GM10248 (cell line): ENCODE measurements at regions of chr6 and their contacts with region 1.

Region 1: DNA sequence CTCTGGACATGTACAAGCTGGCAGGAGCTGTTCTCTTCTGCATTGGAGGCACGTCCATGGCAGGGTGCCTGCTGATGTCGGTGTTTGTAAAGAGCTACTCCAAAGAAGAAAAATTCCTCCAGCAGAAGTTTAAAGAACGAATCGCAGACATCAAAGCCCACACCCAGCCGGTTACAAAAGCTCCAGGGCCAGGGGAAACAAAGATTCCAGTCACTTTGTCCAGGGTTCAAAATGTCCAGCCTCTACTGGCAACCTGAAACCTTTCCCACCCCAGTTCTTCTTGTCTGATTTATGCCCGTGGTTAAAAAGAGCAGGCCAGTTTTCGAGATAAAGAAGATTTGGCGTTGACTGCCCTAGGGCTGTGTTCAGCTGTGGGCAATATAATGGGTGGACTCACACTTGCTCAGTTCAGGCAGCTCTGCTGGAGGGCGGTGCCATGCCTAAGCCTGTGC is 19.7 kb downstream of the NRSN1 start:
- DNase-seq: no peak
- CTCF ChIP-seq: no peak

Region 2: GRCh38 chr6:24078200-24078599 is 67.5 kb before region 1 on chr6:
- CTCF ChIA-PET with region 1: no interaction called
- POLR2A ChIA-PET with region 1: no interaction called
- DNase-seq: no peak
- CTCF ChIP-seq: no peak

Region 3: GRCh38 chr6:24157886-24158285 is 12.2 kb after region 1 on chr6:
- CTCF ChIA-PET with region 1: interaction called, 14 read pairs
- POLR2A ChIA-PET with region 1: no interaction called
- DNase-seq: no peak
- CTCF ChIP-seq: no peak

Region 4: DNA sequence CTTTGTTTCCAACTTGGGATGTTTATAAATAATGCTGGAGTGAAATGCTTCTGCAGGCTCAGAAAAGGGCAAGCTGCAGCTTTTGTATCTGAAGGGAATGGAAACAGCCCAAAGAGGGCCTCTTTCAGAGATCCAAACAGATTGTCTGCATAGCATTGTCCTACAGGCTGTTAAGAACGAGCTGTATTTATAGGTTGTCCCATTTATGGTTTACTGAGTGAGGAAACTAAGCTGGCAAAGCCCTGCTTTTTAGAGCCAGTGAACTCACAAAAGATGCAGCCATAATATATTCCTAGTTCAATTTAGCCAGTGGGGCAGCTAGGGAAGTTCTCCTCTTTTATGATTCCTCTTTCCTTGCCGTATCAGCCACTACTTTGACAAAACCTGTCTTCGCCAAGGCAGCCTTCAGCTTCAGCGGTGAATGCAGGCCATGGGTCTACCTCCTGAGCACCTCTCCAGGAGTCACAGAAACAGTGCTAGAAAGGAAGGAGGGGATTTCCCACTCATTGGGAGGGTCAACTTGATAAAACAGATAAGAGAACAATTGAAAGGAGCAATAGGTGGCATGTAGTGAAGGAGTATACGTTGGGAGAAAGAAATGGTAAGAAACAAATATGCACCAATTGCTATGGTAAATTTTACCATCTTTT is 485.3 kb after region 1 on chr6:
- CTCF ChIA-PET with region 1: no interaction called
- POLR2A ChIA-PET with region 1: no interaction called
- DNase-seq: no peak
- CTCF ChIP-seq: no peak